Sigmoid colon (tissue), 7 donors: ENCODE measurements at regions of chr18 and their contacts with region 1.

Region 1: DNA sequence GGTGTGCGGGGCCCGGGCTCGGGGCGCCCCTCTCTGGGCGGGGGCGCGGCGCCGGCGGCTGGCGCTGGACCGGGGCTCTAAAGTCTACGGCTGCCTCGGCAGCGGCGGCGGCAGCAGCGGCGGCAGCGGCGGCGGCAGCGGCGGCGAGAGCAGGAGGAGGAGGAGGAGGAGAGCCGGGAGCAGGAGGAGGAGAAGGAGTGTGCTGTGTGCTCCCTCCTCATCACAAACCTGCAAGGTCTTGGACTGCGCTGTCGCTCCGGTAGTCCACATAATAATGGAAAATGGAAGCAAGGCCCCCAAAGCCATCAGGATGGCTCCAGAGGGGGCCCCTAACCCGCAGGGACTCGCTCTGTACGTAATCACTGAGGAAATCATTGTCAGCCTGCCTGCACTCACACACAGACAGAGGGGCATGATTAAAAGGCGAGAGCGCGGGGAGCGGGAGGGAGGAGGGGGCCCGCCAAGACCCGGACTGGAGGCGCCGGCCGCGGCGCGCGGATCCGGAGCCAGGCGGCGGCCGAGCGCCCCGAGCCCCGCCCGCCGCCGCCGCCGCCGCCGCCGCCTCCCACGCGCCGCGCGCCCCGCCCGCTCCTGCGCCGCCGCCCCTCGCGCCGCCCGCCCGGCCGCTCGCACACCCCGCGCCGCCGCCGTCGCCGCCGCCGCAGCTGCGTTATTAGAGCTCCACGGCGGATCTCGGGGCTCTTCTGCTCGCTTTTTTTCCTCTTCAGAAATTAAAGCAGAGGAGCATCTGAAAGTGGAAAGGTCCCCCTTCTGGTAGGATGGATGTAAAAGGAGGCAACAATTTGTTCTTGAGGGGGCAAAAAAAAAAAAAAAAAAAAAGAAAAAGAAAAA is at the start of gene ZNF521:
- DNase-seq: peak; percentile 94
- H3K4me3 ChIP-seq: peak within 1 kb of the TSS; percentile 49 to 77 (median 65)
- H3K27ac ChIP-seq: peak within 1 kb of the TSS; percentile 85 to 92 (median 88)
- H3K4me1 ChIP-seq: peaks cover 0 to 21% (median 4%) of the 10 kb centered on the region in 4 donors
- H3K27me3 ChIP-seq: peaks cover 0 to 4% (median 0%) of the 10 kb centered on the region in 3 donors
- CTCF ChIP-seq: no peak
- EP300 ChIP-seq: no peak
- POLR2A ChIP-seq: no peak
- total RNA-seq, gene ZNF521: 12.0 to 40.2 (median 22.7) TPM

Region 2: DNA sequence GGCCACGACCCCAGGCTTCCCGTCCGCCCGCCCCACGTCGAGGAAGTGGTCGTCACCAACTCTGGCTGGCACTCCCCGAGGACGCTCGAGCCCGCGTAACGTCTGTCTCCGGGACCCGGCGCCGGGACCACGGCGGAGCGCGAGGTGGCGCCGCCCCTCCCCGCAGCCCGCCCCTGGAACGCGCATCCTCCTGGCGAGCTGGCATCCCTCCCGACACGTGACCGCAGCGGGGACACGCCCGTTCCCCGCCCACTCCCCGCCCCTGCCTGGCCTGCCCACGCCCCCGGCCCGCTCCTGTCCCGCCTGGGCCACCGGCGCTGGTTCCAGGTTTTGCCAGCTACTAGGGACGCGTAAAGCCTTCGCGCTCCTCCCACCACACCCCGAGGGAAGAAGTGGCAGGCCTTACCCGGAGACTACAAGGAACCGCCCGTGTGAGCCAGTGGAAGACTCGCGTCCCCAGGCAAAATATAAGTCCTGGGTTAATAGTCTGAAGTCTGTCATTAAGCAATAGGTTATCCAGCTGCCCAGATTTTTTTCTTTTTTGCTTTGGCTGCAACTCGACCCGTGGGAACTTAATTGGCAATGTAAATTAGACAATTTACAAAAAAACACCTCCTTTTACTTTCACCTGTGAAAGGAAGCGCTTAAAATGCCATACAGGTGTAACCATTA is 954.2 kb before region 1 on chr18 and contains the start of gene OSBPL1A:
- intact Hi-C with region 1: loop called (anchors 5 kb)
- DNase-seq: peak; percentile 98
- H3K4me3 ChIP-seq: peak within 1 kb of the TSS; percentile 69 to 88 (median 73)
- H3K27ac ChIP-seq: peak within 1 kb of the TSS; percentile 74 to 91 (median 86)
- H3K4me1 ChIP-seq: peaks cover 0 to 13% (median 9%) of the 10 kb centered on the region in 4 donors
- H3K27me3 ChIP-seq: no peaks in the 10 kb centered on the region
- CTCF ChIP-seq: no peak
- EP300 ChIP-seq: peak in 1 of 4 donors; percentile 10
- POLR2A ChIP-seq: no peak
- total RNA-seq, gene OSBPL1A: 71.3 to 110 (median 94.6) TPM

Region 3: DNA sequence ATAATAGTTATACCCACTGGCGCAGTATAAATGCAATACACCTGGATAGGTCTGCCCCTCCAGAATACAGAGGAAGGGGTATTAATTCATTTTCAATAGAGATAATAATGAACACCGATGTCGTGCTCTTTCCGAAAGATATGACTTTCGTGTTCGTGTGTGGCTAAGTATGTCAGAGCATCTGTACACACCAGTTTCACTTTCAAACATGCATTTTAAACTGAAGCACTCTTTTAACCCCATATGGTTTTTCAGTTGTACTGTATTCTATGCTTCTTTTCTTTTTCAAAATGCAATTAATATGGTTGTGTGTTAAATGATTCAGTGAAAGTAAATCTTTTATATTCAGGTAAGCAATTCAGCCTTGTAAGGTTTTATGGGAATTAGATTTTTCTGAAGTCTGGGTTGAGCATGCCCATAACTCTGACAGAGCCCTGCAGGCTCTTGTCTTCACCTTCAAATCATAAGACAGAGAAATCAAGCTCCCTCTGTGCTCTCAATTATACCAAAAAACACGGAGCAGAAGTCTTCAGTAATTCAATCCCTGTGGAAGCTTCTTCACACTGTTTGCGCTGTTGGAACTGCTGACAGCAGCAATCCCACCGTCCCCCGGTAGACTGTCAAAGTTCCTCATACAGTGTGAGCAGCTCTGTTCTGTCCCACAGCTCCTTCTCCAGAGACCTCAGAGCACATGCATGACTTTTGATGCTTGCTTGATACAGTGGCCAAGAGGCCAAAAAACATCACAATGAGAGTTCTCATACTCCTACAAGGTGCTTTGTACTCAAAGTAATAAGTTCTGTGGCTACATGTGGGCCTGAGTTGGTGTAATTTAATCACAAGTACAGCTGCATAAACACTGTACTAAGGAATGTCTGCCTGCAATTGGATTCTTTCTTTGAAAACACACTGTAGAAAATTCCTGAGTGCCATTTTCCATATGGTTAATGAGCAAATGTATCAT is 186.9 kb before region 1 on chr18:
- intact Hi-C with region 1: loop called (anchors 10 kb)
- DNase-seq: no peak
- H3K4me3 ChIP-seq: peak overlapping the region; percentile 13 to 34 (median 28)
- H3K27ac ChIP-seq: peak overlapping the region in 3 of 4 donors; percentile 6 to 14 (median 7)
- H3K4me1 ChIP-seq: peaks cover 0 to 10% (median 3%) of the 10 kb centered on the region in 4 donors
- H3K27me3 ChIP-seq: no peaks in the 10 kb centered on the region
- CTCF ChIP-seq: no peak
- EP300 ChIP-seq: no peak
- POLR2A ChIP-seq: no peak

Region 4: DNA sequence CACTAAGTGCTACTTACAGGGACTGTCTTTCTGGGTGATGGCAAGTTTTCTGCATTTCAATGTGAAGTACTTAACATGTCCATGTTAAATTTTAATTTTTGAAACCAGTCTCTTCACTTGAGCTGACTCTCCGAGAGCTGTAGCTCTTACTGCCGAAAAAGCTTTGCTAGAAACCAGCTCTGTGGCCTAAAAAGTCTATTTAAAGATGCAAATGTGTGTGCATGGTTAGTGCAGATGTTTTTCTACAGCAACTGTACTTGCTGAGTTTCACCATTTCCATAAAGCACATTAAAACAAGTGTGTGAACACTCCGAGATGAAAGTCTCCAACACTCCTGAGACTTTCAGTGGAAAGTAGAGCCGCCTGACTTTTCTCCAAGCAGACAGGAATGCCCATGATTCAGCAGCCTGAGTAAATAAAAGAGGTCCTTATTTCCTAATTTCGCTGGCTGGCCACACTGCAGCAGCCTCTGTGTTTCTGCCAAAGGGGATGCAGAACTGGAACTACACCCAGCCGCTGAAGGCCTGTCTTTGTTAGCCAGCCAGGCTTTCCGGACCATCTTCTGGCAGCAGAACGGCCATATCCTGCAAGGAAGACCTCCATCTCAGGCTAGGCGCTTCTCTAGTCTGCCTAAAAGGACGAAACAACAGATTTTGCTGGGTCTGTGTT is 121.2 kb before region 1 on chr18:
- intact Hi-C with region 1: loop called (anchors 5 kb)
- DNase-seq: peak; percentile 93
- H3K4me3 ChIP-seq: peak overlapping the region in 2 of 4 donors; percentile 6 to 8
- H3K27ac ChIP-seq: peak overlapping the region; percentile 48 to 70 (median 60)
- H3K4me1 ChIP-seq: peaks cover 0 to 22% (median 22%) of the 10 kb centered on the region in 4 donors
- H3K27me3 ChIP-seq: no peaks in the 10 kb centered on the region
- CTCF ChIP-seq: no peak
- EP300 ChIP-seq: peak in 1 of 4 donors; percentile 22
- POLR2A ChIP-seq: no peak

Region 5: DNA sequence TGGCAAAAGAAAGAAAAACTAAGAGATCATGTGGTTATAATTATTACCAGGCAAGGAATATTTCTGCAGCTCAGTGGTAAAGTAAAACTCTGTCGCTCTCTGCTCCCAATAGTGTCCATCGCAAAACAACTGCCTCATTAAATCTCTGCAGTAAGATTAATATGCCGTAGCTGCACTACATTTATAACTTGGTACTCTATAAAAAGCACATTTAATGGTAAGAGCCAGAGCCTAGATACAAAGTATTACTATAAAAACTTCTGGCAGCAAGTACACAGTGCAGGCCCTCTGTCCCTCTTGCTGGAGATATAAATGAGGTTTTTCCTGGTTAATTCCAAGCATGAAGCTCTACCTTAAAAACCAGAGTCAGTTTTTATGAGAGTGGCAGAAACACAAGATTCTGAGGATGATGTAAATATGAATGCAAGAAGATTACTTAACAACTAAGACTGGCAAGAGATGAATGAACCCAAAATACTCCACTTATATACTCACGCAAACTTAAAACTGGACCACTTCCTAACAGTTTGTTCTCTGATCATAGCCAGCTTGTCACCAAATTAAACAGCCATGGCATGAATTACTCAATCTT is 25.5 kb before region 1 on chr18:
- intact Hi-C with region 1: loop called (anchors 2 kb)
- DNase-seq: no peak
- H3K4me3 ChIP-seq: no peak overlapping the region
- H3K27ac ChIP-seq: peak overlapping the region in 3 of 4 donors; percentile 6 to 44 (median 34)
- H3K4me1 ChIP-seq: peaks cover 0 to 30% (median 23%) of the 10 kb centered on the region in 4 donors
- H3K27me3 ChIP-seq: no peaks in the 10 kb centered on the region
- CTCF ChIP-seq: no peak
- EP300 ChIP-seq: no peak
- POLR2A ChIP-seq: no peak

Region 6: DNA sequence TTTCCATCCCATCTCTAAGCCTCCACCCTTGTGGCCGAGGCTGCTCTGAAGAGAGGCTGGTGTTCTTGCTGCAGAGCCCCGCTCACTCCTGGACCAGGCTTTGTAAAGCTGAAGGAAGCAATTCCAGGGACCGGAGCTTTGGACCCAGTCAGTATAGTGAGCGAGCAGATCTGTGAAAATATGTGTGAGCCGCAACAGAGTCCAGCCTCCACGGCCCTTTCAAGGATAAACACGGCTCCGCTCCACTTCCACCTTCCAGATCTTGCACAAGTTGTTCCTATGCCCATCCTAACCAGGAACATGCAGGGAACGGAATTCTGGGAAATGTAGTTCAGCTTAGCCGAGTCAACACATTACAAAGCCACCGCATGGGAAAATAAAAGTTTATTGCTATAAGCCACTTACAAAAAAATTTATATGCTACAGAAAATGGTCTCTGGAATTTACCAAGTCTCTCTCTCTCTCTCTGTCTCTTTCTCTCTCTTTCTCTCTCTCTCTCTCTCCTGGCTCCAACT is 151.6 kb after region 1 on chr18:
- intact Hi-C with region 1: loop called (anchors 1 kb)
- DNase-seq: peak; percentile 87
- H3K4me3 ChIP-seq: peak overlapping the region; percentile 29 to 45 (median 40)
- H3K27ac ChIP-seq: peak overlapping the region; percentile 41 to 67 (median 58)
- H3K4me1 ChIP-seq: peaks cover 0 to 6% (median 2%) of the 10 kb centered on the region in 4 donors
- H3K27me3 ChIP-seq: no peaks in the 10 kb centered on the region
- CTCF ChIP-seq: no peak
- EP300 ChIP-seq: no peak
- POLR2A ChIP-seq: no peak